ENCODE measurements at regions of chr16 and their contacts with region 1.

Region 1: DNA sequence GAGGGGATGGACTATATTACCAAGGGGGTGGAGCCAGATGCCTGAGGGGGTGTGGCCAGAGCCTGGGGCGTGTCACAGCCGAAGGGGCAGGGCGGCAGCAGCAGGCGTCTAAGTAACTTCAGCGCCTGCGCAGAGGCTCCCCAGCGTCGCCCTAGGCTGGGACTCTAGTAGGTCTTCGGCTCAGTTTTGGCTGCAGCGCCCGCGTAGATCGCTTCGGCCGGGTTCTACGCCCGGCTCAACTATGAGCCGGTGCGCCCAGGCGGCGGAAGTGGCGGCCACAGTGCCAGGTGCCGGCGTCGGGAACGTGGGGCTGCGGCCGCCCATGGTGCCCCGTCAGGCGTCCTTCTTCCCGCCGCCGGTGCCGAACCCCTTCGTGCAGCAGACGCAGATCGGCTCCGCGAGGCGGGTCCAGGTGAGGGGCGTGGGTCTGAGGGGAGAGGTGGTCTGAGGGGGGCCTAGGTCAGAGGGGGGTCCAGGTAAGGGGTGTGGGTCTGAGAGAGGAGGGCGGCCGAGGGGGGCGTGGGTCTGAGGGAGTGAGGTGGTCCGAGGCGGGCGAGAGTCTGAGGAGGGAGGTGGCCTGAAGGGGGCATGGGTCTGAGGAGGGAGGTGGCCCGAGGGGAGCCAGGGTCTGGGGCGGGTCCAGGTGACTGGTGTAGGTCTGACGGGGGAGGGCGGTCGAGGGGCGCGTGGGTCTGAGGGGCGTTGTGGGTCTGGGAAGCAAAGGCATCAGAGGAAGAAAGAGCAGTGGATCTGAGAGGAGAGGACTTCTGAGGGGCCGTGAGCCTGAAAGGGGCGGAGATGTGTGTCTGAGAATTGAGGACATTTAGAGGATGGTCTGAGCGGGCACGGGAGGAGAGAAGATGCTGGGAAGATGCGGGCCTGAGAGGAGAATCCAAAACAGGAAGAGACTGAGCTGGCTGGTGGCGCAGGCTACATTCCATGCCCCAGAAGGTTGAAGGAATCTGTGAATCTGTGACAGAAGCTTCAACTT is at the start of gene LPCAT2:
- DNase-seq: peak; percentile 92 to 93
- H3K4me3 ChIP-seq: peak within 1 kb of the TSS; percentile 96
- H3K4me3 Mint-ChIP-seq: peak within 1 kb of the TSS; percentile 80
- H3K27ac Mint-ChIP-seq: peak within 1 kb of the TSS; percentile 20
- H3K4me1 ChIP-seq: peaks cover 9% of the 10 kb centered on the region; the same call in 1 of the 2 replicates
- H3K4me1 Mint-ChIP-seq: peaks cover 15% of the 10 kb centered on the region
- H3K27me3 ChIP-seq: no peaks in the 10 kb centered on the region
- H3K27me3 Mint-ChIP-seq: no peaks in the 10 kb centered on the region
- CTCF ChIP-seq: peak in 1 of 2 experiments; percentile 3
- total RNA-seq, gene LPCAT2: 20.7 and 25.2 TPM in 2 replicates

Region 2: GRCh38 chr16:55530316-55530856 is 21.1 kb after region 1 on chr16:
- CTCF ChIA-PET with region 1: no interaction called
- POLR2A ChIA-PET with region 1: no interaction called
- intact Hi-C with region 1: loop called (anchors 1 kb)
- DNase-seq: peak; percentile 65 to 84
- H3K4me3 ChIP-seq: no peak overlapping the region
- H3K4me3 Mint-ChIP-seq: peak overlapping the region; percentile 63
- H3K27ac Mint-ChIP-seq: peak overlapping the region; percentile 82
- H3K4me1 ChIP-seq: peaks cover 34% of the 10 kb centered on the region
- H3K4me1 Mint-ChIP-seq: peaks cover 15% of the 10 kb centered on the region
- H3K27me3 ChIP-seq: no peaks in the 10 kb centered on the region
- H3K27me3 Mint-ChIP-seq: no peaks in the 10 kb centered on the region
- CTCF ChIP-seq: no peak

Region 3: DNA sequence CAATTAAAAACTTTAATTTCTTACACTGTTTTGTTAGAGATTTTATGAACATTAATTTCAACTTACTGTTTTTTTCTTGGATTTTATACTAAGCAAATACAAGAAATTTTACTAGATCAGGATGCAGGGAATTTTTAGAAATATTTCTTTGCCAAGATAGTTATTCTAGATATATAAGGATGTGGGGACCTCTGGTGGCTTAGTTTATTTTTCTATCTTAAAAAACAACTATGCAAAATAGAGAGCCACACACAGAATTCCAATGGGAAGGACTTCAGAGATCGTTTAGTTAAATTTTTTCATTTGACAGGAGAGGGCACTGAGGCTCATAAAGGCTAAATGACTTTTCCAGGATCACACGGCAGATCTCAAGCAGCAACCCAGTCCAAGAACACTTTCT is 34.2 kb after region 1 on chr16:
- CTCF ChIA-PET with region 1: no interaction called
- POLR2A ChIA-PET with region 1: no interaction called
- intact Hi-C with region 1: loop called (anchors 2 kb)
- DNase-seq: peak in 1 of 2 experiments; percentile 30
- H3K4me3 ChIP-seq: no peak overlapping the region
- H3K4me3 Mint-ChIP-seq: no peak overlapping the region
- H3K27ac Mint-ChIP-seq: no peak overlapping the region
- H3K4me1 ChIP-seq: no peaks in the 10 kb centered on the region; the same call in 1 of the 2 replicates
- H3K4me1 Mint-ChIP-seq: no peaks in the 10 kb centered on the region
- H3K27me3 ChIP-seq: no peaks in the 10 kb centered on the region
- H3K27me3 Mint-ChIP-seq: no peaks in the 10 kb centered on the region
- CTCF ChIP-seq: peak in 1 of 2 experiments; percentile 37

Region 4: DNA sequence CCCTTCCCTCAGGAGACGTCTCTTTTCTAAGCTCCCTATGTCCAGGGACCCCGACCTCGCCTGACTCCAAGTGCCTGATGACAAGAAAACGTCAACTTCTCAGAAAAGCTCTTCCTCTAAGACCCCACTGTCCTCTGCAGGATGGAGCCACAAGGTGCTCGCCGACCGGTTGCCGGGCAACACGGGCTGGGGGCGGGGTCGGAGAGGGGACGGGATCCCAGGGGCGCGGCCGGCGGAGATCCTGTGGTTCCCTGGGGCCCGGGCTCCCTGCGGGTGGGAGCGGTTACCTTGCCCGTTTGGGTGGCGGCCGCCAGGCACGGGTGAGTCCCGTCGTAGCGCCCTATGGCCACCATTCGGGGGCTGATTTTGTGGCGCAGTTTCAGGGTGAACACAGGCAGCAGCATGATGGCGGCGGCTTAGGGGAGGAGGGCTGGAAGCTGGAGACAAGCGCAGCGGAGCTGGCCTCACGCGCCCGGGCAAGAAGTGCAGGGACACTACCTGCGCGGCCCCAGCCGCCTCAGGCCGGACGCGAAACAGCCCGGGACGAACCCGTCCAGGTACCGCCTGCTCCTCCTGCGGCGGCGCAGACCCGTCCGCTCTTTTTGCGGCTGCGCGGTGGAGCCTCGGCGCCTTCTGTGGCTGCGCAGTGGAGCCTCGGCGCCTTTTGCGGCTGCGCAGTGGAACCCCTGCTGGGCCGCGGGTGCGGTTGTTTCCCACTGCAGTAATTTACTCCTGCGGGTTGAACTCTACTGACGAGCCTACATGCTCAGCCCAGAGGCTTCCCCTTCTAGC is 1010.4 kb after region 1 on chr16 and contains the start of gene BBS2:
- CTCF ChIA-PET with region 1: no interaction called
- POLR2A ChIA-PET with region 1: no interaction called
- intact Hi-C with region 1: loop called (anchors 10 kb)
- DNase-seq: peak; percentile 93 to 96
- H3K4me3 ChIP-seq: peak within 1 kb of the TSS; percentile 59
- H3K4me3 Mint-ChIP-seq: peak within 1 kb of the TSS; percentile 81
- H3K27ac Mint-ChIP-seq: peak within 1 kb of the TSS; percentile 79
- H3K4me1 ChIP-seq: peaks cover 7% of the 10 kb centered on the region
- H3K4me1 Mint-ChIP-seq: peaks cover 7% of the 10 kb centered on the region
- H3K27me3 ChIP-seq: no peaks in the 10 kb centered on the region
- H3K27me3 Mint-ChIP-seq: no peaks in the 10 kb centered on the region
- CTCF ChIP-seq: no peak
- total RNA-seq, gene BBS2: 25.6 and 27.7 TPM in 2 replicates

Measured in Caco-2 (cell line).